GM12878 (cell line): ENCODE measurements at regions of chr20 and their contacts with region 1.

Region 1: GRCh38 chr20:34403908-34404307 is 40.8 kb downstream of the ITCH start:
- DNase-seq: no peak
- ATAC-seq: peak; percentile 81
- H3K4me3 ChIP-seq: peak overlapping the region; percentile 6; the same call in 1 of the 2 replicates
- H3K27ac ChIP-seq: peak overlapping the region; percentile 76
- H3K4me1 ChIP-seq: peaks cover 30% of the 10 kb centered on the region
- H3K27me3 ChIP-seq: no peaks in the 10 kb centered on the region
- CTCF ChIP-seq: no peak
- EP300 ChIP-seq: no peak
- POLR2A ChIP-seq: no peak
- RAD21 ChIP-seq: no peak

Region 2: DNA sequence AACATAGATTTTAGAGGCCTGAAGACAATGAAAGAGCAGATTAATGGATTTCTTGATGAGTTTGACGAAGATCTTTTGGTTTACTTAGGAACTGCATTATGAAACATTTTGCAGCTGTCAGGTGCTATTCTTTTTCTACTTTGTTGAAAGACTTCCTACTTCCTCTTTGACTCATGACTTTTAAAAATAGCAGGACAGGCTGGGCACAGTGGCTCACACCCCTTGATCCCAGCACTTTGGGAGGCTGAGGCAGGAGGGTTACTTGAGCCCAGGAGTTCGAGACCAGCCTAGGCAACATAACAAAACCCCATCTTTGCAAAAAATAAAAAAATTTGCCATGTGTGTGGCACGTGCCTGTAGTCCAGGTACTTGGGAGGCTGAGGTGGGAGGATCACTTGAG is 11.2 kb after region 1 on chr20:
- CTCF ChIA-PET with region 1: interaction called, 3 read pairs
- POLR2A ChIA-PET with region 1: interaction called, 9 read pairs
- RAD21 ChIA-PET with region 1: interaction called, 25 read pairs
- SMC1A ChIA-PET with region 1: interaction called, 35 read pairs
- in situ Hi-C with region 1: no loop called
- intact Hi-C with region 1: no loop called
- DNase-seq: peak; percentile 39
- ATAC-seq: peak; percentile 85
- H3K4me3 ChIP-seq: no peak overlapping the region
- H3K27ac ChIP-seq: peak overlapping the region; percentile 76
- H3K4me1 ChIP-seq: peaks cover 20% of the 10 kb centered on the region
- H3K27me3 ChIP-seq: no peaks in the 10 kb centered on the region
- CTCF ChIP-seq: no peak
- EP300 ChIP-seq: peak; percentile 40 to 46; a peak in 1 of 4 replicates
- POLR2A ChIP-seq: no peak
- RAD21 ChIP-seq: no peak

Region 3: DNA sequence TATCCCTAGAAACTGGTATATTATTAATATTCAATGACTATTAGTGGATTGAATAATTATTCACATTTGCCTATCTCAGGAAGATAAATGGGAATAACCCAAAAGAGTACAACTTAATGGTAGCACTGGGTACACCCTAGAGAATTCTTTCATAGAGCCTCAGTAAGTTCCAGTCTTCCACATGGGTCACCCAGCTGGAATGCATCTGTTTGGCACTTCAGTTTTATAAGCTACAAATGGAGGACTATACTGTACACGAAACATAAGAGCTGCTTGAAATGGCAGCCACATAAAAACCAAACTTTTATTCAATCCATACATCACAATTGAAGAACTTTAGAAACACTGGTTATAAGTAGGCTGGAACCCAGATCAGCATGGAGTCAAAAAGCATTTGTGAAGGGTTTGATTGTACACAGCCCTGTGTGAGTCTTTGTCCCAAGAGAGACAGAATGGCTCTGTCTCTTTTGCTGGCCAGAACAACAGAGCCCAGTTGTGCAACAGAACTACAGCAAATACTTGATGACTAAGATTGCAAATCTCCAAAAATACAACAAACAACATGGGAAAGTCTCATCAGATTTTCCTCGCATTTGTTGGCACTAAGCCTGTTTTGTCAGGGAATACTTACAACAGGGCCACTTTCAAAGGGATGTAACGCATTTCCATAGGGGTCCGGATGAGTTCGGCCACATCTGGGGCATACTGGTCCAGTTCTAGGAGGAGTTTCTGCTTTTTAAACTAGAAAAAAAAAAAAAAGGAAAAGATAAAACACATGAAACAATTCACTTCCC is 233.5 kb after region 1 on chr20:
- CTCF ChIA-PET with region 1: no interaction called
- POLR2A ChIA-PET with region 1: no interaction called
- RAD21 ChIA-PET with region 1: no interaction called
- SMC1A ChIA-PET with region 1: no interaction called
- in situ Hi-C with region 1: no loop called
- intact Hi-C with region 1: no loop called
- DNase-seq: no peak
- ATAC-seq: no peak
- H3K4me3 ChIP-seq: no peak overlapping the region
- H3K27ac ChIP-seq: no peak overlapping the region
- H3K4me1 ChIP-seq: no peaks in the 10 kb centered on the region
- H3K27me3 ChIP-seq: no peaks in the 10 kb centered on the region
- CTCF ChIP-seq: no peak
- EP300 ChIP-seq: no peak
- POLR2A ChIP-seq: no peak
- RAD21 ChIP-seq: no peak